ENCODE measurements at regions of chr2 and their contacts with region 1.

Region 1: DNA sequence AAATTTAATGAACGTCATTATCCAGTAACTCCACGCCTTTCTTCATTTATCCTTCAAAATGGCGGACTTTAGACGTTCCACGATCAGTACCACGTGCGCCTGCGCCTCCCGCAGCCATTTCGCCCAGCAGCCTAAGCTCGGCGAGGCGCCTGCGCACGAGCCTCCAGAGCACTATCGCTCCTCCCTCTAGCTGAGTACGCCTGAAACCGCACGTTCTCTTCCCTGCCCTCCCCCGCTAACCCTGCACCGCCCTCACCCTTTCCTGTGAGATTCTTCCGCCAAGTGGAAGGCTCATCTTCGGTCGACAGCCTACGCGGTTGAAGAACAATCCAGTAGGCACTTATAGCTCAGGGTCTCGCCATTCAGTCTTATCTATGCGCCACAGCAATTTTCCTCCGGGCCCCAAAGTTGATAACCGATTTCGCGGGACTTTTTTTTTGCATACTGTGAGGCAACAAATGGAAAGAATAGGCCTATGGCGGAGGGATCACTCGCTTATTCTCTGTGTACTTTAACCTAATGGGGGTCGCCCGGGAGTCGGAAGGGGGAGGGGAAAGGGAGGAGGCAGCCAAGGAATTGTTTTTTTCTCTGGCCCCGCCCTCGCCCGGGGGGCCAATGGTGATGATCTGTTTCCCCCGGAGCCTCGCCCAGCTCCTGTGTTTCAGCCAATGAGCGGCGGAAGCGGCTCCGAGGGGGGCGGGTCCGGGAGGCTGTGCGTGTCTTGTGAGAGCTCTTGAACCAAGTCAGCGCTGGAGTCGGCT is at the start of gene KDM3A:
- DNase-seq: peak; percentile 100
- H3K4me3 Mint-ChIP-seq: peak within 1 kb of the TSS; percentile 95
- H3K27ac Mint-ChIP-seq: peak within 1 kb of the TSS; percentile 99
- H3K4me1 Mint-ChIP-seq: peaks cover 45% of the 10 kb centered on the region
- H3K27me3 Mint-ChIP-seq: peaks cover 6% of the 10 kb centered on the region
- total RNA-seq, gene KDM3A: 69.6 and 74.0 TPM in 2 replicates

Region 2: DNA sequence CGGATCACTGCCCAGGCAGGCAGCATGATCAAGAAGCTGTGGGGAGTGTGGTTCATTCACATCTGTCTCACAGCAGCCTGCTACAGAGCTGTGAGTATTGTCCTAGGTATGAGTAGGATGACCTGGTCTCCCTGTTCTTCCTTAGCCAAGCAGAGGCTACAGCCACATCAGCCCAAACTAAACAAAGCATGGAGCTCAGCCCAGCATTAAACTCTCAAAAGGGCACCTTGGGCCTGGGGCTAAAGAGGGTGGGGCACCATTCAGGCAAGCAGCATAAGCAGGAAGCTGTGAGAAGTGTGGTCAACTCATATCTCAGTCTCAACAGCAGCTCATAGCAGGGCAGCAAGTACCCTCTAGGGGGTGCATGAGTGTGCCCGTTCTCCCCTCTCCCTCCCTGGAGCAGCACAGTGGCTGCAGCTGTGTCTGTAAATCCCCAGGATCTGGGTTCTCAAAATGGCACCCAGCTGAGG is 1699.5 kb before region 1 on chr2:
- intact Hi-C with region 1: no loop called
- DNase-seq: peak; percentile 80
- H3K4me3 Mint-ChIP-seq: no peak overlapping the region
- H3K27ac Mint-ChIP-seq: no peak overlapping the region
- H3K4me1 Mint-ChIP-seq: peaks cover 7% of the 10 kb centered on the region
- H3K27me3 Mint-ChIP-seq: peaks cover 14% of the 10 kb centered on the region

Region 3: GRCh38 chr2:86105252-86105968 is 335.4 kb before region 1 on chr2 and contains the start of gene POLR1A:
- intact Hi-C with region 1: loop called (anchors 2 kb)
- DNase-seq: peak; percentile 95
- H3K4me3 Mint-ChIP-seq: peak within 1 kb of the TSS; percentile 94
- H3K27ac Mint-ChIP-seq: peak within 1 kb of the TSS; percentile 96
- H3K4me1 Mint-ChIP-seq: peaks cover 43% of the 10 kb centered on the region
- H3K27me3 Mint-ChIP-seq: no peaks in the 10 kb centered on the region
- total RNA-seq, gene POLR1A: 66.8 and 73.5 TPM in 2 replicates

Region 4: GRCh38 chr2:86195055-86195807 is 245.6 kb before region 1 on chr2 and contains the start of gene IMMT:
- intact Hi-C with region 1: loop called (anchors 1 kb)
- DNase-seq: peak; percentile 98
- H3K4me3 Mint-ChIP-seq: peak within 1 kb of the TSS; percentile 99
- H3K27ac Mint-ChIP-seq: peak within 1 kb of the TSS; percentile 97
- H3K4me1 Mint-ChIP-seq: peaks cover 36% of the 10 kb centered on the region
- H3K27me3 Mint-ChIP-seq: no peaks in the 10 kb centered on the region
- total RNA-seq, gene IMMT: 181 and 188 TPM in 2 replicates

Region 5: GRCh38 chr2:86453836-86454235 is 13.0 kb after region 1 on chr2:
- intact Hi-C with region 1: no loop called
- DNase-seq: no peak
- H3K4me3 Mint-ChIP-seq: no peak overlapping the region
- H3K27ac Mint-ChIP-seq: no peak overlapping the region
- H3K4me1 Mint-ChIP-seq: peaks cover 17% of the 10 kb centered on the region
- H3K27me3 Mint-ChIP-seq: no peaks in the 10 kb centered on the region

Region 6: GRCh38 chr2:86464652-86465051 is 23.8 kb after region 1 on chr2:
- intact Hi-C with region 1: loop called (anchors 1 kb)
- DNase-seq: no peak
- H3K4me3 Mint-ChIP-seq: peak overlapping the region; percentile 49
- H3K27ac Mint-ChIP-seq: peak overlapping the region; percentile 74
- H3K4me1 Mint-ChIP-seq: peaks cover 52% of the 10 kb centered on the region
- H3K27me3 Mint-ChIP-seq: no peaks in the 10 kb centered on the region

Region 7: GRCh38 chr2:86480105-86480504 is 39.3 kb after region 1 on chr2:
- intact Hi-C with region 1: loop called (anchors 5 kb)
- DNase-seq: no peak
- H3K4me3 Mint-ChIP-seq: no peak overlapping the region
- H3K27ac Mint-ChIP-seq: no peak overlapping the region
- H3K4me1 Mint-ChIP-seq: peaks cover 37% of the 10 kb centered on the region
- H3K27me3 Mint-ChIP-seq: no peaks in the 10 kb centered on the region

Region 8: GRCh38 chr2:86562922-86563649 is 122.3 kb after region 1 on chr2 and contains the start of gene CHMP3:
- intact Hi-C with region 1: loop called (anchors 1 kb)
- DNase-seq: peak; percentile 99
- H3K4me3 Mint-ChIP-seq: peak within 1 kb of the TSS; percentile 95
- H3K27ac Mint-ChIP-seq: peak within 1 kb of the TSS; percentile 99
- H3K4me1 Mint-ChIP-seq: peaks cover 24% of the 10 kb centered on the region
- H3K27me3 Mint-ChIP-seq: peaks cover 2% of the 10 kb centered on the region
- total RNA-seq, gene CHMP3: 28.3 and 29.0 TPM in 2 replicates

Region 9: DNA sequence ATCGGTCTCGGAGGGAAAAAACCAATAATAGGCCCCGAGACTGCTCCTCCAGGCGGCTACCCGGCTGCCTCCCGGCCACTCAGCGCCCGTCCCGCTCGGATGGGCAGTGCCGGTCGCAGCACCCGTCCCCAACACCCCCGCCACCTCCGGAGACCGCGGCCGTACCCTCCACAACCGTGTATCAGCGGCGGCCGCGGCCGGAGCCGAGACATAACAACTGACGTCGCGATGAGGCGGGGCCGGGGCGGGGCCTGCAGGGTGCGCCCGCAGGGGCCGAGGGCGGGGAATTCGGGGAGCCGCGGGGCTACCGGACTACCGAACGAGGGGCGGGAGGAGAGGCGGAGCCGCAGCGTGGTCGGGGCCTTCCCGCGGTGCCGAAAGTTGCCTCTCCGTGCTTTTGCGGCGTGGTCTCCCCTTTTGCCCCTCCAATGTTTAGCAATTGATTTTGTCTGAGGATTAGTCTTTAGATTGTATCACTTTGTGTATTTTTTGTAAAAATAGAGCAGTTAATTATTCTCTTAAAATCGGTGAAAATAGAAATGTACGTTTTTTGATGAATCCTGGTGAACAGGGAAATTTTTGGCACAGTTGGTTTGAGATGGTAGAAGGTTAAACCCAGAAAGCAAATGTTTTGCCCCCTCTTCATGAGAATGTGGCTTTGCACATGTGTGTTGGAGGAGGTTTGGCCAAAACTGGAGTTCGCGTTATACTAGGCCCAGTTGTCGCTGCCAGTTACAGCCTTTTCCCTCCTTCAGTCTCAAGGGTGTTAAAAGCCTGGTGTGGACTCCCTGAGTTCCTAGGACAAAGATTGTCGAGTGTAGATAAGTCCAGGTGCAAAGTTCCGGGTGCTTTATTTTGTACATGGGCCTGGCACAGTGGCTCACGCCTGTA is 183.1 kb after region 1 on chr2 and contains the start of gene RNF103:
- intact Hi-C with region 1: loop called (anchors 1 kb)
- DNase-seq: peak; percentile 98
- H3K4me3 Mint-ChIP-seq: peak within 1 kb of the TSS; percentile 93
- H3K27ac Mint-ChIP-seq: peak within 1 kb of the TSS; percentile 97
- H3K4me1 Mint-ChIP-seq: peaks cover 20% of the 10 kb centered on the region
- H3K27me3 Mint-ChIP-seq: peaks cover 19% of the 10 kb centered on the region
- total RNA-seq, gene RNF103: 11.7 and 12.1 TPM in 2 replicates

Measured in activated CD4-positive, alpha-beta T cell treated with anti-CD3 and anti-CD28 coated beads, Interleukin-2, amount 10 ng/mL, durations not matched to agents 24 days and 14 days (primary cell).